Common myeloid progenitor, CD34-positive (primary cell): ENCODE measurements at regions of chr11 and their contacts with region 1.

Region 1: GRCh38 chr11:72471005-72471898 is 36.9 kb upstream of the CLPB start:
- DNase-seq: peak; percentile 63 to 82 (median 76)
- H3K4me3 ChIP-seq: no peak overlapping the region
- H3K27ac ChIP-seq: no peak overlapping the region
- H3K4me1 ChIP-seq: peaks cover 0 to 3% (median 1%) of the 10 kb centered on the region in 4 experiments
- H3K27me3 ChIP-seq: peaks cover 0 to 8% (median 4%) of the 10 kb centered on the region in 5 experiments

Region 2: GRCh38 chr11:72460091-72460647 is 11.1 kb before region 1 on chr11:
- CTCF ChIA-PET with region 1: interaction called, 11 read pairs
- POLR2A ChIA-PET with region 1: no interaction called
- DNase-seq: no peak
- H3K4me3 ChIP-seq: no peak overlapping the region
- H3K27ac ChIP-seq: no peak overlapping the region
- H3K4me1 ChIP-seq: no peaks in the 10 kb centered on the region
- H3K27me3 ChIP-seq: peaks cover 0 to 10% (median 0%) of the 10 kb centered on the region in 5 experiments

Region 3: GRCh38 chr11:72573072-72573854 is 102.0 kb after region 1 on chr11:
- CTCF ChIA-PET with region 1: interaction called, 20 read pairs
- POLR2A ChIA-PET with region 1: no interaction called
- DNase-seq: peak; percentile 51 to 63 (median 60)
- H3K4me3 ChIP-seq: no peak overlapping the region
- H3K27ac ChIP-seq: no peak overlapping the region
- H3K4me1 ChIP-seq: peaks cover 0 to 7% (median 0%) of the 10 kb centered on the region in 4 experiments
- H3K27me3 ChIP-seq: peaks cover 0 to under 1% (median 0%) of the 10 kb centered on the region in 5 experiments

Region 4: DNA sequence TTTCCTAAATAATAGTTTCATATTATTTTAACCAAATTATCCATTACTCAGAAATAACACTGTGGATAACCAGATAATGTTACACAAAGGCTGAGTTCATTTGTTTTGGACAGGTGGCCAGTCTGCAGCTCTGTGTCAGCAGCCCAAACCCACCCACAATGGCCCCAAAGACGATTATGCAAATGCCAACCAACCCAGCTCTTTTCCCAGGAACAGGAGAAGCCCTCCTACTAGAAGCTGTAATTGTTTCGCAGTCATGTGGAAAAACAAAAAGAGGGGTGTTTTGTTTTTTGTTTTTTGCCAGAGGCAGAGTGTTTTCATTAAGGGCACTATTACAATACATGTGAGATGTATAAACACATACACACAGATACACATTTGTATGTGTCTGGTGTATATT is 568.8 kb after region 1 on chr11:
- CTCF ChIA-PET with region 1: no interaction called
- POLR2A ChIA-PET with region 1: no interaction called
- DNase-seq: no peak
- H3K4me3 ChIP-seq: no peak overlapping the region
- H3K27ac ChIP-seq: no peak overlapping the region
- H3K4me1 ChIP-seq: no peaks in the 10 kb centered on the region
- H3K27me3 ChIP-seq: no peaks in the 10 kb centered on the region